IMR-90 (cell line): ENCODE measurements at regions of chr1 and their contacts with region 1.

Region 1: DNA sequence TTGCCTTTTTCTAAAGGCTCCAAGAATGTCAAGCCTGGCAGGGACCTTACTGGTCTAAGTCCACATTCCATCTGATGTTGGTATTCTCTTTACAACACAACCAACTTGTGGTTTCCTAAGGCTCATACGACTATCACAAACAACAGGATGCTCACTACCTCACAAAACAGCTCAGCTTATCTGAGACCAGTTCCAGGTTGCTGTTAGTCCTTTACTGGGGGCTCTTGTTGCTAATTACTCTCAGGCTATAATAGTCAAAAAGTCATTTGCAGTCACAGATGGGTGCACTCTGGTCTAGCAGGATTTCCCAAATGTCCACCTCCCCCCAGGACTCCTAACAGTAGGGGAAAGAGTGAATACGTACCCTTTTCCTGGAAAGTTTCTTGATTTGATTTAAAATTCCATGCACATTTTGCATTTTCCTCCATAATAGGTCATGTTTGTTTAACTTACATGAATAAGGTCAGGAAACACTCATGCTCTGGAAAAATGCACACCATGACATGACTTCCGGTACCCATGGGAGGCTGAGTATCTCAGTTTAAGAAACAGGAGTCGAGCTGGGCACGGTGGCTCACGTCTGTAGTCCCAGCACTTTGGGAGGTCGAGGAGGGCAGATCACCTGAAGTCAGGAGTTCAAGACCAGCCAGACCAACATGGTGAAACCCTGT is 16.0 kb downstream of the LCK start:
- DNase-seq: peak; percentile 84
- ATAC-seq: peak; percentile 84
- H3K4me3 ChIP-seq: no peak overlapping the region
- H3K27ac ChIP-seq: peak overlapping the region; percentile 81
- H3K4me1 ChIP-seq: peaks cover 8% of the 10 kb centered on the region
- H3K27me3 ChIP-seq: no peaks in the 10 kb centered on the region
- CTCF ChIP-seq: no peak
- POLR2A ChIP-seq: no peak
- RAD21 ChIP-seq: no peak

Region 2: GRCh38 chr1:32250893-32251716 is 16.0 kb before region 1 on chr1 and contains the start of gene LCK:
- CTCF ChIA-PET with region 1: interaction called, 5 read pairs
- POLR2A ChIA-PET with region 1: interaction called, 12 read pairs
- dilution Hi-C with region 1: no loop called
- in situ Hi-C with region 1: no loop called
- intact Hi-C with region 1: no loop called
- DNase-seq: no peak
- ATAC-seq: no peak
- H3K4me3 ChIP-seq: no peak within 1 kb of the TSS
- H3K27ac ChIP-seq: no peak within 1 kb of the TSS
- H3K4me1 ChIP-seq: peaks cover 16% of the 10 kb centered on the region
- H3K27me3 ChIP-seq: peaks cover 2% of the 10 kb centered on the region; the same call in 1 of the 2 replicates
- CTCF ChIP-seq: no peak
- POLR2A ChIP-seq: no peak
- RAD21 ChIP-seq: no peak
- total RNA-seq, gene LCK: not detected in 2 replicates